ENCODE measurements at regions of chr13 and their contacts with region 1.

Region 1: DNA sequence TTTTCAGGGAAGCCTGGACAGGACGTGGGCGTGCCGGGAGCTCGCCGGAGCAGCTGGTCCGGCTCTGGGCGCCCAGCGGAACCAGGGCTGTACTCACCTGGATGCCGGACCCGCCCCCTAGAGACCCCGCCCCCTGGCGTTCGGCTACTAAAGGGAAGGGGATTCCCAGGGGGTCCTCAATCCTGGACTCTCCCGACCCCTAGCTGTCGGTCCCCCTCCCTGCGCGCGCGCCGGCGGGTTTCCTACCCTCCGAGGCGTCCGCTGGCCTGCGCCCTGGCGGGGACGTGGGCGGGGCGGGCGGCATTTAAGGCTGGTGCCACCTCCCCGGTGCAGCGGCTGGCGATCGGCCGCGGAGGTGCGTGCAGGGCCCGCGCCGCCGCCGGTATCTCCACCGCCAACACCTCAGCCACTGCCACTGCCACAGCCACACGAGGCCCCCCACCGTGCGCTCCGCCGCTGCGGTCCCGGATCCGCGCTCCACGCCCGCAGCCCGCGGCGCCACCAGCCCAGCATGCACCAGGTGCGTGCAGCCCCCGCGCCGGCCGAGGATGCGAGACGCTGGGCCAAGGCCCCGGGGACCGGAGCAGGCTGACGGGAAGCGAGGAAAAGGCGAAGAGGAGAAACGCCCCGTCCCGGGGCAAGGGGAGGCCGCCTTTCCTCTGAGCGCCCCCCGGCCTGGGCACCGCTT is at the start of gene ATP12A:
- DNase-seq: no peak
- H3K4me3 ChIP-seq: peak within 1 kb of the TSS in 2 of 3 donors; percentile 55 to 66
- H3K27ac ChIP-seq: no peak within 1 kb of the TSS
- H3K4me1 ChIP-seq: peaks cover 0 to 3% of the 10 kb centered on the region in 2 donors
- H3K27me3 ChIP-seq: peaks cover 0 to 16% of the 10 kb centered on the region in 2 donors
- CTCF ChIP-seq: no peak
- POLR2A ChIP-seq: no peak
- total RNA-seq, gene ATP12A: not detected

Region 2: GRCh38 chr13:24650161-24650560 is 30.2 kb before region 1 on chr13:
- intact Hi-C with region 1: loop called (anchors 2 kb)
- DNase-seq: no peak
- H3K4me3 ChIP-seq: no peak overlapping the region
- H3K27ac ChIP-seq: peak overlapping the region in 1 of 2 donors; percentile 32
- H3K4me1 ChIP-seq: no peaks in the 10 kb centered on the region
- H3K27me3 ChIP-seq: no peaks in the 10 kb centered on the region
- CTCF ChIP-seq: no peak
- POLR2A ChIP-seq: no peak

Measured in breast epithelium (tissue), 4 donors.